ENCODE measurements at regions of chr6 and their contacts with region 1.

Region 1: DNA sequence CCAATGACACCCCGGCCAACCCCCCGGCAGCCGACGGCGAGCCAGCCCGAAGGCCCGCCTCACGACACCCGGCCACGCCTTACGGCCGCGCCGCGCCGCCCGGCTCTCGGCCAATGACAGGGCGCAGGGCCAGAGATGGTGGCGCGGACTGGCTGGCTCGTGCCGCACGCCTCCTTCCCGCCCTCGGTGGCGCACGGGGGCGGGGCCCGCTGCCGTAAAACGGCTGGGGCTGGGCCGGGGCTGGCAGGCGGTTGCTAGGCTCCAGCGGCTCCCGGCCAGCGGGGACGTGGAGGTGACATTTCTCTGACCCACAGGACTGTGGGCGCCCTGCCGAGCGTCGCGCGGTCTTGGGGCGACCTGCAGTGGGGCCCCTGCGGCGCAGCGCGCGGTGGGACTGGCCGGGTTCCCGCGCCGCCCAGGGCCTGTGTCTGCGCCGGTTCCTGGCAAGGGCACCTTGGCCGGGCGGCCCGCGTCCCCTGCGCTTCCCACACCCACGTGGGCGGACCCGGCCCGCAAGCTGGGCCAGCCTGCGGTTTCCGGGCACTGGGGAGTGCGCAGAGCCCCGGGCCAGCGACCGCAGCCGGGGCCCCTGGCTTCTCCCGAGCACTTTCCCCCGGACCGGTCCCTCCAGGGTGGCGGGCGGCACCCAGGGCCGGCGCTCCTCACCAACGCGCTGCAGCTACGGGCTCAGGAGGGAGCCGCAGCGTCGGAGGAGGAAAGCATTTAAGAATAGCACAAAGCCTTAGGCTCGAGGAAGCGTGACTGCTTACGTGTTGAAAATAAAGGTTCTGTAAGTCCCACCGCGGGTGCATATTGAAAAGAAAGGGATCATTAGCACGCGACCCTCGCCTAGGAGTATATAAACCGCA is at the start of gene MPC1:
- DNase-seq: peak; percentile 98
- H3K4me3 ChIP-seq: peak within 1 kb of the TSS; percentile 96
- H3K27ac ChIP-seq: peak within 1 kb of the TSS; percentile 98
- H3K4me1 ChIP-seq: peaks cover 59% of the 10 kb centered on the region
- H3K27me3 ChIP-seq: no peaks in the 10 kb centered on the region
- CTCF ChIP-seq: no peak
- total RNA-seq, gene MPC1: 531 TPM

Region 2: DNA sequence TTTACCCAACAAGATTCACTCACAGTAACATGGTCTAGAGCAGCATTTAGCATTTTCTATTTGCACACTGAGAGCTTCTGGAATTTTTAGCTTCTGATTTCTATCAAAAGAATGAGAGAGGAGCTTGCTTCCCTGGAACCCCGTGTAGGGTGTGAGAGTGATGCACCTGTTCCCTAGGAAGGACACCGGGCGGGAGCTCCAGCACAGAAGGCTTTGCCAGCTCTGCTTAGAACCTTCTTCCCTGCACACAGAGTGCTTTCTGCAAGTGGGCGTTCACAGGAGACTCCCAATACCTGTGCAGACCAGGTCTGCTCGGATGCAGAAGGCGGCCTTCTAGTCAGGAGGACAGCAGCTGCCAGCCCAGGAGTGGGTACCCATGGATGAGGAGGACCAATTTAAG is 432.9 kb before region 1 on chr6:
- intact Hi-C with region 1: no loop called
- DNase-seq: no peak
- H3K4me3 ChIP-seq: no peak overlapping the region
- H3K27ac ChIP-seq: no peak overlapping the region
- H3K4me1 ChIP-seq: no peaks in the 10 kb centered on the region
- H3K27me3 ChIP-seq: peaks cover 17% of the 10 kb centered on the region
- CTCF ChIP-seq: no peak

Region 3: DNA sequence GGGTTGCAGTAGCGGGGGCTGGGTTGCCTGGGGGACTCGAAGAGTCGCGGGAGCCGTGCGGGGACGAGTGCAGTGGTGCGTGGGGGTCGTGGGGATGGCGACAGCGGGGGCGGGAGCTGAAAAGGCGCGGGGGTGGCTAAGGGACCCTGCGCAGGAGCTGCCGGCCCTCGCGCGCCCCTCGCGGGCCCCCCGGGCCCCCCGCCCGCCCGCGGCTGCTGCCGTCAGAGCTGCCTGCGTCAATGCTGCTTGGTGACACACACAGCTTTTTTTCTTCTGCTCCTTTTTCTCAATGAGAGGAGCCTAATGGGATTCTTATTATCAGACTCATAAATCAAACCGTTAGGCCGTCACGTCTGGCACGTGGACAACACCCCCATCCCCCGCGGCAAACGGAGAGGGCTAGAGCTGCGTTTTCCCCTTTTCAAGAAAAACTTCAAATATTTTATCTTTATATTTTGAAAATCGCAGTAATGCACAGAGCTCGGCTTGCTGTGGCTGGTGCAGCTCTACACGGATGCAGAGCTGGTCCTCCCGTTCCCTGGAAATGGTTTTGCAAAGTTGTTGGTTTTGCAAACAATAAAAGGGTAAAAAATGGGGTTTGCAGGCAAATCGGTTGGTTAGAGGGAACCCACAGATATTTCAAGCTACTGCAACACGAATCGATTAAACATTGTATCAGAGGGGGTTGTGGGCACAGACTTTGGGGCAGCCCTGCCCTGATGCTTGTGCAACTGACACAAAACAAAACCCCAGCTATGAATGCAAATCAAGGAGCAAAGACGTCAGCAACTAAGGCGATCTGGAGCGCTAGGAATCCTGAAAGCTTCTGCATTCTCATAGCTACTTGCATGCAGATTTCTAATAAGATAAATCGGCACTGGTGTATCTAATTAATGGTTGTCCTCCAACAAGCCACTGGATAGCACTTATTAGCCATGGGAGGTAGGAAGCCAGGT is 376.9 kb before region 1 on chr6:
- intact Hi-C with region 1: no loop called
- DNase-seq: peak; percentile 66
- H3K4me3 ChIP-seq: peak overlapping the region; percentile 60
- H3K27ac ChIP-seq: peak overlapping the region; percentile 83
- H3K4me1 ChIP-seq: peaks cover 44% of the 10 kb centered on the region
- H3K27me3 ChIP-seq: peaks cover 83% of the 10 kb centered on the region
- CTCF ChIP-seq: no peak

Region 4: GRCh38 chr6:166325383-166326042 is 57.7 kb before region 1 on chr6:
- intact Hi-C with region 1: loop called (anchors 10 kb)
- DNase-seq: no peak
- H3K4me3 ChIP-seq: no peak overlapping the region
- H3K27ac ChIP-seq: no peak overlapping the region
- H3K4me1 ChIP-seq: peaks cover 8% of the 10 kb centered on the region
- H3K27me3 ChIP-seq: no peaks in the 10 kb centered on the region
- CTCF ChIP-seq: no peak